Activated CD8-positive, alpha-beta memory T cell treated with anti-CD3 and anti-CD28 coated beads, Interleukin-2, amount 10 ng/mL, durations not matched to agents 7 days and 5 days (primary cell): ENCODE measurements at regions of chr11 and their contacts with region 1.

Region 1: GRCh38 chr11:128157423-128158298 is 429.7 kb downstream of the ETS1 start:
- DNase-seq: peak; percentile 67
- ATAC-seq: peak; percentile 91
- H3K4me3 Mint-ChIP-seq: peak overlapping the region; percentile 47
- H3K27ac Mint-ChIP-seq: peak overlapping the region; percentile 77
- H3K4me1 Mint-ChIP-seq: peaks cover 4% of the 10 kb centered on the region
- H3K27me3 Mint-ChIP-seq: peaks cover 9% of the 10 kb centered on the region

Region 2: DNA sequence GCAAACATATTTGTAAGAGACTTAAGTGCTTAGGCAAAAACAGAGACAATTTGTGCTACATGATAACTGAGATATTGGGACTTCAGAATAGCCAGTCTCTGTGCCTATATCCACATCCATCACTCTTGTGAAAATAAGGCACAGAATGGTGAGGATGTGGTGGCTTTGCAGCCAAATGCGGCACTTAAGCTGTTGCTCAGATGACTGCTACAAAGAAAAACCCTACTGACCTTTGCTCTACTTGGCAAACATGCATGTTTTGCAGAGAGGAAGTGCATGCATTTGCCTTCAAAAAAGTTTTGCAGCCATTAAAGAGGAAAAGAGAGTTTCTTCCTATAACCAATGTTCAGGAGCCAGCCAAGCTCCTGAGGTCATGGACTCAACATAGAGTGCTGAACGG is 482.1 kb before region 1 on chr11:
- CTCF ChIA-PET with region 1: no interaction called
- DNase-seq: no peak
- ATAC-seq: no peak
- H3K4me3 Mint-ChIP-seq: no peak overlapping the region
- H3K27ac Mint-ChIP-seq: no peak overlapping the region
- H3K4me1 Mint-ChIP-seq: no peaks in the 10 kb centered on the region
- H3K27me3 Mint-ChIP-seq: no peaks in the 10 kb centered on the region

Region 3: GRCh38 chr11:128026596-128026995 is 131.1 kb before region 1 on chr11:
- CTCF ChIA-PET with region 1: interaction called, 64 read pairs
- DNase-seq: no peak
- ATAC-seq: no peak
- H3K4me3 Mint-ChIP-seq: no peak overlapping the region
- H3K27ac Mint-ChIP-seq: no peak overlapping the region
- H3K4me1 Mint-ChIP-seq: peaks cover 14% of the 10 kb centered on the region
- H3K27me3 Mint-ChIP-seq: peaks cover 25% of the 10 kb centered on the region

Region 4: GRCh38 chr11:128052912-128053641 is 104.6 kb before region 1 on chr11:
- CTCF ChIA-PET with region 1: interaction called, 51 read pairs
- DNase-seq: no peak
- ATAC-seq: peak; percentile 68
- H3K4me3 Mint-ChIP-seq: peak overlapping the region; percentile 49
- H3K27ac Mint-ChIP-seq: peak overlapping the region; percentile 87
- H3K4me1 Mint-ChIP-seq: peaks cover 58% of the 10 kb centered on the region
- H3K27me3 Mint-ChIP-seq: no peaks in the 10 kb centered on the region

Region 5: DNA sequence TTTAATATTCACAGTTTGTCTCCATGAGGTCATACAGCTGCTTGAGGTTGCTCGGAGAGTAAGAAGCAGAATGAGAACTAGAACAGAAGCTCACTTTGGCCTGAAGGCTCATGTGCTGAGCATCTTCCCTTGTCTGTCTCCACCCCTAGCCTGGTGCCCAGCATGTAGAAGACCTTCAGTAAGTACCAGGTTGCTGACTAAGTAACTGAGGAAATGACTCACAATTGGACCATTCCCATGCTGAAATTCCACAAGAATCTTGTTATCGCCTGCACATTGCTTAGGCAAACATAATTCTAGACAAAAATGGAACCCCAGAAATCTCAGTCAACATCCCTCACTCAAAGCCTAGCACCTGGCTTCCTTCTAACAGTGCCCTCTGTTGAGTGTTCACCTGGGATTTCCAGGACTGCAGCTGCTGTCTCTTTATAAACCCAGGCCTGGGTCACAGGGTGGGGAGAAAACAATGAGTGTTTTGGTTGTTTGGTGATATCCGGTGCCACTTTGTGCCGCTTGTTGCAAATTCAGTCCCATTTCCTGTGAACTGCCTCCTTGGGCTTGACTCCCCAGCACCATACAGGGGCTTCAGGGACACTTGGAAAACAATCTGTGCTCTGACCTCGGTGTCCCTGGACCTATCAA is 22.9 kb after region 1 on chr11:
- CTCF ChIA-PET with region 1: interaction called, 74 read pairs
- DNase-seq: no peak
- ATAC-seq: no peak
- H3K4me3 Mint-ChIP-seq: no peak overlapping the region
- H3K27ac Mint-ChIP-seq: no peak overlapping the region
- H3K4me1 Mint-ChIP-seq: peaks cover 5% of the 10 kb centered on the region
- H3K27me3 Mint-ChIP-seq: no peaks in the 10 kb centered on the region

Region 6: GRCh38 chr11:128831174-128832120 is 673.8 kb after region 1 on chr11:
- CTCF ChIA-PET with region 1: interaction called, 32 read pairs
- DNase-seq: peak; percentile 92
- ATAC-seq: peak; percentile 90
- H3K4me3 Mint-ChIP-seq: peak overlapping the region; percentile 66
- H3K27ac Mint-ChIP-seq: peak overlapping the region; percentile 95
- H3K4me1 Mint-ChIP-seq: peaks cover 28% of the 10 kb centered on the region
- H3K27me3 Mint-ChIP-seq: no peaks in the 10 kb centered on the region